ENCODE measurements at regions of chr6 and their contacts with region 1.

Region 1: DNA sequence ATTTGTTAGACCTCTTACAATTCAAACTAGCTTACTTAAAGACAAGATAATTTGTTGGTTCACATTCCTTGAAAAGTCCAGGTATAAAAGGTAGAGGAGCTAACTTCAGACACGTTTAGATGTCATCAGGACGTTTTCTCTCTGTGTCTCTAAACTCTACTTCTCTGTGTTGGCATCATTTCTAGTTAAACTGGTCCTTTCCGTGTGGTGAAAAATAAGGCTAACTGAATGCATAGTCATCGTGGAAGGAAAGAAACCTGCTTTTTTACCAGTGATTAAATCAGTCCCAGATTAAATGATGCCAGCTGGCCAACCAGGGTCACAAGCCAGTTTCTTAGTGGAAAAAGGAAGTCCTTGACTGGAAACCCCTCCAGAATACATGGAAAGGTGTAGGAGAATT is 168.4 kb upstream of the AHI1 start:
- DNase-seq: no peak

Region 2: GRCh38 chr6:135329851-135330803 is 335.8 kb before region 1 on chr6:
- intact Hi-C with region 1: no loop called
- DNase-seq: no peak

Region 3: GRCh38 chr6:135693811-135694370 is 28.0 kb after region 1 on chr6:
- intact Hi-C with region 1: loop called in 1 of 2 experiments (anchors 2 kb)
- DNase-seq: no peak

Measured in posterior vena cava (tissue), 2 donors.